Thyroid gland (tissue), 4 donors: ENCODE measurements at regions of chr16 and their contacts with region 1.

Region 1: GRCh38 chr16:68790130-68790761 is 53.1 kb upstream of the TANGO6 start:
- DNase-seq: peak; percentile 50 to 57
- H3K4me3 ChIP-seq: no peak overlapping the region
- H3K27ac ChIP-seq: peak overlapping the region; percentile 48 to 73 (median 72)
- H3K4me1 ChIP-seq: peaks cover 17 to 42% of the 10 kb centered on the region in 2 donors
- H3K27me3 ChIP-seq: no peaks in the 10 kb centered on the region
- CTCF ChIP-seq: no peak
- POLR2A ChIP-seq: no peak

Region 2: GRCh38 chr16:68737046-68737729 is 53.1 kb before region 1 on chr16 and contains the start of gene CDH1:
- intact Hi-C with region 1: loop called (anchors 5 kb)
- DNase-seq: peak; percentile 98
- H3K4me3 ChIP-seq: peak within 1 kb of the TSS; percentile 75 to 92 (median 86)
- H3K27ac ChIP-seq: peak within 1 kb of the TSS; percentile 92 to 98 (median 97)
- H3K4me1 ChIP-seq: peaks cover 33 to 46% of the 10 kb centered on the region in 2 donors
- H3K27me3 ChIP-seq: no peaks in the 10 kb centered on the region
- CTCF ChIP-seq: no peak
- POLR2A ChIP-seq: peak; percentile 97 to 100
- total RNA-seq, gene CDH1: 177 to 287 (median 279) TPM